H1 (cell line): ENCODE measurements at regions of chr22 and their contacts with region 1.

Region 1: GRCh38 chr22:39559454-39560105 is 11.0 kb upstream of the CACNA1I start:
- DNase-seq: peak; percentile 41 to 86
- H3K4me3 ChIP-seq: peak overlapping the region in 1 of 4 experiments; percentile 19; a peak in 2 of 8 replicates
- H3K27ac ChIP-seq: no peak overlapping the region
- H3K4me1 ChIP-seq: peaks cover 4 to 21% (median 6%) of the 10 kb centered on the region in 4 experiments; a peak in 6 of 7 replicates
- H3K27me3 ChIP-seq: peaks cover 30 to 53% (median 48%) of the 10 kb centered on the region in 4 experiments
- CTCF ChIP-seq: peak; percentile 81 to 87 (median 83)
- EP300 ChIP-seq: no peak
- POLR2A ChIP-seq: no peak
- RAD21 ChIP-seq: peak; percentile 58 to 74

Region 2: GRCh38 chr22:39482768-39483167 is 76.8 kb before region 1 on chr22:
- CTCF ChIA-PET with region 1: no interaction called
- POLR2A ChIA-PET with region 1: no interaction called
- DNase-seq: no peak
- H3K4me3 ChIP-seq: no peak overlapping the region
- H3K27ac ChIP-seq: no peak overlapping the region
- H3K4me1 ChIP-seq: no peaks in the 10 kb centered on the region
- H3K27me3 ChIP-seq: no peaks in the 10 kb centered on the region; a peak in 1 of 7 replicates
- CTCF ChIP-seq: no peak
- EP300 ChIP-seq: no peak
- POLR2A ChIP-seq: no peak
- RAD21 ChIP-seq: no peak

Region 3: GRCh38 chr22:39543095-39543494 is 16.5 kb before region 1 on chr22:
- CTCF ChIA-PET with region 1: interaction called, 14 read pairs
- POLR2A ChIA-PET with region 1: interaction called, 4 read pairs
- DNase-seq: no peak
- H3K4me3 ChIP-seq: no peak overlapping the region
- H3K27ac ChIP-seq: no peak overlapping the region
- H3K4me1 ChIP-seq: peaks cover 0 to under 1% (median under 1%) of the 10 kb centered on the region in 4 experiments; a peak in 3 of 7 replicates
- H3K27me3 ChIP-seq: peaks cover 0 to 15% (median 11%) of the 10 kb centered on the region in 4 experiments; a peak in 6 of 7 replicates
- CTCF ChIP-seq: peak; percentile 67 to 89 (median 84)
- EP300 ChIP-seq: no peak
- POLR2A ChIP-seq: no peak
- RAD21 ChIP-seq: peak; percentile 75 to 78

Region 4: GRCh38 chr22:39574779-39575551 is 15.4 kb after region 1 on chr22:
- CTCF ChIA-PET with region 1: interaction called, 47 read pairs
- POLR2A ChIA-PET with region 1: no interaction called
- DNase-seq: no peak
- H3K4me3 ChIP-seq: no peak overlapping the region
- H3K27ac ChIP-seq: no peak overlapping the region
- H3K4me1 ChIP-seq: peaks cover 0 to 1% (median 0%) of the 10 kb centered on the region in 4 experiments; a peak in 2 of 7 replicates
- H3K27me3 ChIP-seq: peaks cover 0 to 2% (median 0%) of the 10 kb centered on the region in 4 experiments; a peak in 1 of 7 replicates
- CTCF ChIP-seq: no peak
- EP300 ChIP-seq: no peak
- POLR2A ChIP-seq: no peak
- RAD21 ChIP-seq: no peak

Region 5: GRCh38 chr22:39580006-39580441 is 20.4 kb after region 1 on chr22:
- CTCF ChIA-PET with region 1: interaction called, 47 read pairs
- POLR2A ChIA-PET with region 1: no interaction called
- DNase-seq: no peak
- H3K4me3 ChIP-seq: no peak overlapping the region
- H3K27ac ChIP-seq: no peak overlapping the region
- H3K4me1 ChIP-seq: peaks cover 0 to 6% (median 2%) of the 10 kb centered on the region in 4 experiments; a peak in 2 of 7 replicates
- H3K27me3 ChIP-seq: peaks cover 0 to 2% (median 0%) of the 10 kb centered on the region in 4 experiments; a peak in 1 of 7 replicates
- CTCF ChIP-seq: no peak
- EP300 ChIP-seq: no peak
- POLR2A ChIP-seq: no peak
- RAD21 ChIP-seq: no peak